ENCODE measurements at regions of chr2 and their contacts with region 1.

Region 1: DNA sequence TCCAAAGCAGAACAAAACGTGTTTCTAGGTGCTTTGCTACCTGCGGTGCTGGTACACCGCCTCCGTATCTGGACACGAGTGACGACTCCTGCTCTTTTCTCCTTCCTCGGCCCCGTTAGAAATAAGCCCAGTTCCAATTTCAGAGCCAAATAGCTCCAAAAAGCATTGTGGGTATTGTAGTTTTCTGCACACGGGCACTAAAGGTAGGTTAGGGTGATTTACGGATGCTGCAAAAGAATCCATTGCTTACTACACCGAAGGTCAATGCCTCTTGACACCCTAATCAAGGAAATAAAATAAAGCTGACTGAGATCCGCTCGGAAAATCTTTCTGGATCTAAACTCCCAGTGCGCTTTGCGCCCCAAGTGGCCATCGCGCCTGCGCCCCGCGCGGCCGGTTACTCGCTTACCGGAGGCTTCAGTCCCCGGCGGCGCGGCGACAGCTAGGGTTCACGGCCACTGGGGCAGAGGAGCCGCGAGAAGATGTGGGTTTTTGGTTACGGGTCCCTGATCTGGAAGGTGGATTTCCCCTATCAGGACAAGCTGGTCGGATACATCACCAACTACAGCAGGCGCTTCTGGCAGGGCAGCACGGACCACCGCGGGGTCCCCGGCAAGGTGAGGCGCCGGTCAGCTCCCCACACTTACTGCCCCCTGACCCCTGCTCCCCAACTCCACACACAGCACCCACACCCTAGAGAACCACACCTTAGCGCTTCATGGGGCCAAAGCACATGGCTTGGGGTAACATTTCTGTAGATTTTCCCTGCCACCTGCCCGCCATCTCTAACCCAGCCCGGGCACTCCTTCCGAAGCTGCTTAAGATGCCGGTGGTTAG is at the start of gene CHAC2:
- DNase-seq: peak; percentile 94
- ATAC-seq: peak; percentile 96
- H3K4me3 Mint-ChIP-seq: peak within 1 kb of the TSS; percentile 91
- H3K27ac Mint-ChIP-seq: peak within 1 kb of the TSS; percentile 96
- H3K4me1 Mint-ChIP-seq: peaks cover 26% of the 10 kb centered on the region
- H3K27me3 Mint-ChIP-seq: no peaks in the 10 kb centered on the region
- total RNA-seq, gene CHAC2: 15.8 to 17.4 TPM

Region 2: GRCh38 chr2:53751728-53752127 is 15.9 kb before region 1 on chr2:
- CTCF ChIA-PET with region 1: interaction called, 7 read pairs
- POLR2A ChIA-PET with region 1: interaction called, 9 read pairs
- intact Hi-C with region 1: loop called in 1 of 2 experiments (anchors 1 kb)
- DNase-seq: no peak
- ATAC-seq: peak; percentile 92
- H3K4me3 Mint-ChIP-seq: no peak overlapping the region
- H3K27ac Mint-ChIP-seq: no peak overlapping the region
- H3K4me1 Mint-ChIP-seq: peaks cover 29% of the 10 kb centered on the region
- H3K27me3 Mint-ChIP-seq: no peaks in the 10 kb centered on the region

Region 3: DNA sequence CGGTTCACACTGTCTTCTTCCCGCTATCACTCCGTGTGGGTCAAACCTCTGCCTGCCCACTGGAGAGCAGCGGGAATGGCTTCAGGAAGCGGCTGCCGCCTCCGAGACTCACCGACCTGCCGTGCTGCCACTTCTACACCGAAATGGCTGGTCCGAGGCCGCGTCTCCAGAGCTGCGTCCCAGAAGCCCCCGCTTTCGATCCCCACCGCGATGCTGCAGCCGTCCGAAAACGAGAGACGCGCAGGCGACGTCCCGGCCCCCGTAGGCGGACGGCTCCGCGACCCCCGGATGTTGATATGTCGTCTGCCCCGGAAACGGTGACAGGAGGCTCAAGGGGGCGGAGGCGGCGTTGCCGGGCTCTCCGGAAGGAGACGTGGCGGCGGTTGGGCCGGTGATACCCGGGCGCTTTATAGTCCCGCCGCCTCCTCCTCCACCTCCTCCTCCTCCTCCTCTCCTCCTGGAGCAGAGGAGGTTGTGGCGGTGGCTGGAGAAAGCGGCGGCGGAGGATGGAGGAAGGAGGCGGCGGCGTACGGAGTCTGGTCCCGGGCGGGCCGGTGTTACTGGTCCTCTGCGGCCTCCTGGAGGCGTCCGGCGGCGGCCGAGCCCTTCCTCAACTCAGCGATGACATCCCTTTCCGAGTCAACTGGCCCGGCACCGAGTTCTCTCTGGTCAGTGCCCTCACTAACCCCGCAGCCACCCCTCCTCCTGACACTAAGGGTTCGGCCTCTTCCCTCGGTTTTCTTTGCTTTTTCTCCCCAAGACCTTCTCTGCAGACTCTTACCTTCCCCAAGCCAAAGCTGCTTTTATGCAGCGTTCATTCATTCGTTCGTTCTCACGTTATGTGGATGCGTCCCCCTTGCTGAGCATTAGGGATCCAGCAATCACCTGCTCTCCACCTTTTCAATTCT is 19.3 kb after region 1 on chr2 and contains the starts of genes ASB3 and ERLEC1:
- CTCF ChIA-PET with region 1: interaction called, 10 read pairs
- POLR2A ChIA-PET with region 1: interaction called, 24 read pairs
- intact Hi-C with region 1: loop called (anchors 1 kb)
- DNase-seq: peak; percentile 93
- ATAC-seq: peak; percentile 91
- H3K4me3 Mint-ChIP-seq: peak within 1 kb of the TSS; percentile 100
- H3K27ac Mint-ChIP-seq: peak within 1 kb of the TSS; percentile 95
- H3K4me1 Mint-ChIP-seq: peaks cover 47% of the 10 kb centered on the region
- H3K27me3 Mint-ChIP-seq: no peaks in the 10 kb centered on the region
- total RNA-seq, gene ASB3: 17.3 to 23.4 TPM
- total RNA-seq, gene ERLEC1: 18.3 to 20.5 TPM

Region 4: DNA sequence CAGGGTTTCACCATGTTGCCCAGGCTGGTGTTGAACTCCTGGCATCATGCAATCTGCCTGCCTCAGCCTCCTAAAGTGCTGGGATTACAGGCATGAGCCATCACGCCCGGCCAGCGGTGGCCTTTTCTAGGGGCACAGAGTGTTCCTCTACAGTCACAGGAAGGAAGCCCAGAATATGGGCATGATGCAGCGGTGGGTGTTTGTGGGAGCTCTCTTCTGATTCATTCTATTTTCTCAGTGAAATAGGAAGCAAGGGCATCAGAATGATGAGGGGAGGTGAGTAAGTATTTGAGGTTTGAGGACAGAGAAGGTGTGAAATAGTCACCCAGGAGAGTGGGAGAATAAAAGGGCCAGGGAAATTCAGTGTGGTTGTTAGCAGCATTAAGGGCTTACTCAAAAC is 273.5 kb after region 1 on chr2:
- CTCF ChIA-PET with region 1: interaction called, 5 read pairs
- POLR2A ChIA-PET with region 1: no interaction called
- intact Hi-C with region 1: loop called in 1 of 2 experiments (anchors 1 kb)
- DNase-seq: peak; percentile 80
- ATAC-seq: peak; percentile 98
- H3K4me3 Mint-ChIP-seq: no peak overlapping the region
- H3K27ac Mint-ChIP-seq: no peak overlapping the region
- H3K4me1 Mint-ChIP-seq: no peaks in the 10 kb centered on the region
- H3K27me3 Mint-ChIP-seq: no peaks in the 10 kb centered on the region

Region 5: DNA sequence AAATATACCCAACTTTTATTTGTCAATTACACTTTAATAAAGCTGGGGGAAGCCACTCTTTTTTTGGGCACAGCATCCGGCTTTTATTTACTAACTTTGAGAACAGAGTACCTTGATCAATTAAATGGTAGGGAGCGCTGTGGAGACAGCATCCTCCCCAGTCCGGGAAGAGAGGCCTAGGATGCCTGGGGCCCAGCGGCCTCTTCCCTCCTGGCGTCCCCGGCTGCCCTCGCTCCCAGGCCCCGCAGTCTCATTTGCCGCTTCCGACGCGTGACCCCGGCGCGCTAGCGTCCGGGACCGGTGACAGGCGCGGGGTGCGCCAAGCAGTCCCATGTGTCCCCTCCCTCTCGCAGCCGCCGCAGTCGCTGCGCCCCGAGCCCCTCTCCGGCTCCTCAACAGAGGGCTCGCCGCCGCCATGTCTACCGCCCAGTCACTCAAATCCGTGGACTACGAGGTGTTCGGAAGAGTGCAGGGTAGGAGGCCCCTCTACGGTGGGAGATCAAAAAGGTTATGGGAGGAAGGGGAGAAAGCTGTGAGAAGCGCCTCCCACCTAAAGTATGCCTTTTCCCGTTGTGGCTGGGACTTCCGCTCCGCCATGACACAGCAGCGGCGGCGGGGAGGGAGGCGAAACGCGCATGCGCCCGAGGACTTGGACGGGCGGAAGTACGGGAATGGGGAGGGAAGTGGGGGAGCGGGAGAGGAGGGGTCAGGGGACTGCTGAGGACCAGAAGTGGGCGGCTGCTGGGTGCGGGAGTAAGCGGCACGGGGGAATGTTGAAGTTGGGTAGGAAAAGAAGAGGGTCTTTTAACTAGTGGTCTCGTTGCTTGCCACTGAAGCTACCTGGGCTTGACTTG is 347.9 kb after region 1 on chr2 and contains the start of gene ACYP2:
- CTCF ChIA-PET with region 1: no interaction called
- POLR2A ChIA-PET with region 1: no interaction called
- intact Hi-C with region 1: loop called in 1 of 2 experiments (anchors 1 kb)
- DNase-seq: peak; percentile 95
- ATAC-seq: peak; percentile 90
- H3K4me3 Mint-ChIP-seq: peak within 1 kb of the TSS; percentile 85
- H3K27ac Mint-ChIP-seq: peak within 1 kb of the TSS; percentile 96
- H3K4me1 Mint-ChIP-seq: peaks cover 12% of the 10 kb centered on the region
- H3K27me3 Mint-ChIP-seq: peaks cover 2% of the 10 kb centered on the region
- total RNA-seq, gene ACYP2: 6.0 to 6.9 TPM